ENCODE measurements at regions of chr13 and their contacts with region 1.

Region 1: GRCh38 chr13:47064381-47064780 is 167.5 kb upstream of the HTR2A start:
- DNase-seq: no peak
- H3K4me3 ChIP-seq: no peak overlapping the region
- H3K27ac ChIP-seq: no peak overlapping the region
- H3K4me1 ChIP-seq: no peaks in the 10 kb centered on the region
- H3K27me3 ChIP-seq: no peaks in the 10 kb centered on the region
- CTCF ChIP-seq: no peak

Region 2: DNA sequence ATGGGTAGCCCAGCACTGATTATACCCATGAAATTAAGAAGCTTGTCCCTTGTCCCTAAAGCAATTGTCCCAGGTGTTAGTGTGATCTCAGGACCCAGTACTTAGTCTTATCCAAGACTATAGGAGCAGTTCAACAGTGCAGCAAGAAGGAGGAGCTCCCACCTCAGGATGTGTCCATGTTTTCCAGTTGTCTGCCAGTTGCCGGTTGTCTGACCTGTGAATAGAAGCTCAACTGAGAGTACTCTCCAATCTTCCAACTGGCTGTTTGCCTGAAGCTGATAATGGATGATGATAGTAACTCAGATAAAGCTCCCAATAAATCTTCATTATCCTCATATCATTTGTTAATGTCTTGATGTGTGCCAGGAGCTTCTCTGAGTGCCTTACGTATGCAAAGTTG is 60.4 kb before region 1 on chr13:
- CTCF ChIA-PET with region 1: no interaction called
- POLR2A ChIA-PET with region 1: interaction called, 13 read pairs
- intact Hi-C with region 1: no loop called
- DNase-seq: no peak
- H3K4me3 ChIP-seq: no peak overlapping the region
- H3K27ac ChIP-seq: no peak overlapping the region
- H3K4me1 ChIP-seq: no peaks in the 10 kb centered on the region
- H3K27me3 ChIP-seq: no peaks in the 10 kb centered on the region
- CTCF ChIP-seq: no peak

Region 3: GRCh38 chr13:47036291-47037008 is 27.9 kb before region 1 on chr13:
- CTCF ChIA-PET with region 1: no interaction called
- POLR2A ChIA-PET with region 1: no interaction called
- intact Hi-C with region 1: no loop called
- DNase-seq: no peak
- H3K4me3 ChIP-seq: no peak overlapping the region
- H3K27ac ChIP-seq: no peak overlapping the region
- H3K4me1 ChIP-seq: no peaks in the 10 kb centered on the region
- H3K27me3 ChIP-seq: no peaks in the 10 kb centered on the region
- CTCF ChIP-seq: no peak